Cardiac septum (tissue), 1 donor: ENCODE measurements at regions of chr1 and their contacts with region 1.

Region 1: DNA sequence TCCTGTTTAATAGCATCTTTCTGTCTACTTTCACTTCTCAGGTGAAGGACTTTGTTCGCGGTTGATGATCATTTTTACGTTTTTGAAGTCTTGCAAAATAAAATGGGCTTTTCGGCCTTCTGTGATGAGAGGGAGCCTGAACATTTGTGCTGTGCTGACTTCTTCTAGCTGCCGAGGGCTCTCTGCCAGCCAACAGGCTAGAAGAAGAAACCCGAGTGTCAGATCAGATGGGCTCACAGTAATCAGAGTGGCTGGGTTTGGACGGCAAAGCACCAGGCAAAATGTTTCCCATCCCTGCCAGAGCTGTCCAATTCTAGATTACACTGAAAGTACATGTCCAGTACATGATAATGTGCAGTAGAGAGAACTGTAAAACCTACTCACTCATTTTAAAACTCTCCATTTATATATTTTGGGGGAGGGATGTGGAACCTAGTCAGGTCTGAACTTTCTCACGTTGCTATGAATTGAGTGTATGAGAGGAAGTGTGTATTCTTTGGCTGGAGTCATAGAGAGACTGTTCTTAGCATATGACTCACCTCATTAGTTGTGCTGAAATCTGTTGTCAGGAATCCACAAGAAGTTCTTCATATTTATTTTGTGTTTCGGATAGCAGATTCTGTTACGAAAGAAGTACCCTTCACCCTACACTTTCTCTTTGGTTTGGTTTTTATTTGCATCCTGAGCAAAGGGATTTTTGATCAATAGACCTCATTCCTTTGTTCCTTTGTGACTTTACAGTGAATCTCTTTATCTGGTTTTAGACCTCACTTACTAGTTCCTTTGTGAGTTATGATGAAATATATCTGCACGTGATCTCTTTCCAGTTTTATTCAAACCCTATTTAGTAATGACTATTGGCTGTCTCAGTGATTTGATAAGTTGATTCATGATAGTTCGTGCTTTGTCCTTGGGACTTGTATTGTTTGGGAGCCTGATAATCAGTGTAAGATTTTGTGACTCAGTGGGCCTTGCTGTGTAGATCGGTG is 4.8 kb downstream of the ATP1A1 start:
- DNase-seq: no peak

Region 2: DNA sequence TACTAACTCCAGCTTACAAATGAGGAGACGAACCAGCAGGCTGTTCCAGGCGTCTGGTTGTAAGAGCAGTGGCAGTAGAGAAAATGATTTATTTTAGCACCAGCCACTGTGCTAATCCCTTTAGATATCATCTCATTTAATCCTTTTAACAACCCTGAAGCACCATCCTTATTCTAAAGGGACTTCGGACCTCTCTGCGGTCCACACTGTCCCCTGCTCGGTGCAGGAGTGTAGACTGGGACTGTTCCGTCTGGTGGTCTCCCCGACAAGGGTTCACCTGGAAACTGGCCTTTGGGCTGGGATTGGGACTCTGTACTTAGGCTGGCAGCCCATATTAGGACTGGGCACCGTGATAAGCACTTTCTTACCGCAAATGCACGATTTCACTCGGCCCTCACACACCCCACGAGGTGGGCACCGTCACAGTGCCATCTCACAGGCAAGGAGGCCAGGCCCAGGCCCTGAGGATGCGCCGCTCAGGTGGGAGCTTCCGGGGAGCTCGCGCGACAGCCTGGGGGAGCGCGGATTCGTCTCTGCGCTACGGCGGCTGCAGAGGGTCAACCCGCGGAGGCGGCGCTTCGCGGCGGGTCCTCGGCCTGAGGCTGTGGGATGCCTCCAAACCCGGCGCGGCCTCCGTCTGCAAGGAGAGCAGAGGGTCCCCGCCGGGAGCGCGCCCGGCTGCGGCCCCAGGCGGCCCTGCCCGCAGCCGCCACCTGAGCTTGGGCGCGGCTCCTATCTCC is 40.4 kb after region 1 on chr1:
- intact Hi-C with region 1: loop called (anchors 2 kb)
- DNase-seq: peak; percentile 89

Region 3: DNA sequence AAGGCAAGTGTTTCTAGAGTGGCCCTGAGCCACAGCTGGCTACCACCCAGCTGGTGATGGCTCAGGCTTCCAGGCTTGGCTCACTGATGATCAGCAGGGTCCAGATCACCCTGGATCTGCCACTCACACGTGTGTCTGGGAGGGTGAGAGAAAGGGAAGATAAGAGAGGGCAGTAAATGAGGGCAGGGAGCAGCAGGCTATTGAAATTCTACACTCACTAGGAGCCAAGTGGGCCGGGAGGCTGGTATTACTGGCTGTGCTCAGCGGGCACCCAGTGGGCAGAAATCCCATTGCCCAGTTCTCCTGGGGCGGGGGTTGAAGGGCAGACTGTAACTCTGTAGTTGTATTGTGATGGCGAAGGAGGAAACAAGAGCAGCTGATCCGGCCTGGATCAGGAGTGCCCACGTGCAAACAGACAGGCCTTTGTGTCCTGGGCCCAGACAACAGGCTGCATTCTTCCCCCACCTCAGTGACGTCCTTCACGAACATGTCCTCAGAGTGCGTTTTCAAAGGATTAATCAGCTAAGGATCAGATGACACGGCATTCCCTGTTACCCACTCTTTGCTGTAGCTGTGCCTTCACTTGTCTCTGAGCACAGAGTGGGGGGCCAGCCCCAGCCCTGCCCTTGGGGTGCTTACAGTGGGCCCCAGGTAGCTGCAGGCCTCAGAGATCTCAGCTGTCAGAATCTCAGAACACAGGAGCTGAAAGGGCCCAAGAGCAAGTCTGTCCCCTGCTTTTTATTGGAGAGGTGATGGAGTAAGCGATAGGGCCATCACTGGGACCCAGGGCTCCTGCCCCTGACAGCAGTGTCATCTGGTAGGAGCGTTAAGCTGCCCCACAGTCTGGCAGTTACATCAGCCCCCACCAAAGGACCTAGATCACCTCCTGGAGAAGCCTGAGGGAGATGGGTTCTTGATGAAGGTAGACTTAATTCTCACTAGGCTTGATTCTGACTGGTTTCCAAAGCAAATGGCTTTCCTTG is 55.7 kb after region 1 on chr1:
- intact Hi-C with region 1: loop called (anchors 5 kb)
- DNase-seq: peak; percentile 80